Motor neuron (in vitro differentiated cells): ENCODE measurements at regions of chr1 and their contacts with region 1.

Region 1: DNA sequence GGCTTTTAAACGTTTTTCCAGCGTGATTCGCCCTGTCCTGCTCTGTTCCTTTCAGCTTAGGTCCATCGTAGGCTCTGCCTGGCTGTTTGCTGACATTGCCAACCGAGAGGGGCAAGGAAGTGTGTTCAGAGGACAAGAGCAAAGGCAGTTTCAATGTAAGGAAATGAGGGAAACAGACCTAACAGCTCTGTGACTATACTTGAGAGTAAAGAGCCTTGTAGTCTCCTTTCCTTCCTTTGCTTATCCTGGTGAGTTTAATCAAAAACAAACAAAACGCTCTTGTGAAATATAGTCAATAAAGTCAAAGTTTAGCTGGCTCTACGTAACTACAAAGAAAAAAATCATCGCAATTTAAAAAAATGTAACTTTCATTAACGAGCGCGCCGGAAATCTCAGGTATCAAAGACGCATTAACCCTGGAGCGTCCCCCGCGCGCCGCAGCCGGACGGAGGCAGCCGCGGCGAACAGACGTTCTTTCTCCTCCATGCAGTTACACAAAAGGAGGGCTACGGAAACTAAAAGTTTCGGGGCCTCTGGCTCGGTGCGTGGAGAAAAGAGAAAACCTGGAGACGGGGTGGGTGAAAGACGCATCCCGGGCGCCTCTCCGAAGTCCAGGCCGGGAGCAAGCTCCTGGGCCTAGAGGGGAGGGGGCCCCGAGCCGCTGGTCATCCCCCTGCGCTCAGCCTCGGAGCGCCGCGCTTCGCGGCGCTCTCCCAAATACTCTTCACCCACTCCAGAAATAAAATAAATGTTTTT is 617 bp upstream of the ADGRL2 start:
- ATAC-seq: peak in 6 of 8 experiments; percentile 29 to 44 (median 40)
- H3K4me3 ChIP-seq: peak overlapping the region; percentile 77 to 86 (median 80)
- H3K27ac ChIP-seq: peak overlapping the region; percentile 79 to 89
- H3K4me1 ChIP-seq: peaks cover 0 to 8% of the 10 kb centered on the region in 2 donors

Region 2: DNA sequence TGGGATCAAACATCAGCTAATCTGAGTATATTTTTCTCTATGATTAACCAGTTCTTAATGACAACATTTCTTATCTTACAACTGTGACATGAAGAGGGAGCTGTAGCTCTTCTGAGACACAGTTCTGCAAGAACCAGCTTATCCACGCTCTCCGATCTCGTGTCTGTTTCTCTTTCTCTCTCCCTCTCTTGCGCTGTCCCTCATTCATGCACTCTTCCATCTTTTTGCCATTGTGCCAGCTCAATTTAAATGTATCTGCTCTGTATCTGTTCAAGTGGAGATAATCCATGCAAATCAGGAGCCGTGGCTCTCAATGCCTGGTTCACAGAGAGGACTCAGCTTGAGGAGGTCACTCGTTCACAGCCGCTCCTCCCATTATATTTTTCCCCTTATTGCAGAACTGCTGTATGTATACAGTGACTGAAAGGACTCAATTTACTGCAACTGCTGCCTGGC is 494.1 kb before region 1 on chr1:
- in situ Hi-C with region 1: loop called in 2 of 9 experiments (anchors 25 kb)
- ATAC-seq: peak; percentile 81 to 98 (median 97)
- H3K4me3 ChIP-seq: peak overlapping the region; percentile 27 to 51 (median 39)
- H3K27ac ChIP-seq: peak overlapping the region; percentile 29 to 79
- H3K4me1 ChIP-seq: peaks cover 26 to 40% of the 10 kb centered on the region in 2 donors

Region 3: DNA sequence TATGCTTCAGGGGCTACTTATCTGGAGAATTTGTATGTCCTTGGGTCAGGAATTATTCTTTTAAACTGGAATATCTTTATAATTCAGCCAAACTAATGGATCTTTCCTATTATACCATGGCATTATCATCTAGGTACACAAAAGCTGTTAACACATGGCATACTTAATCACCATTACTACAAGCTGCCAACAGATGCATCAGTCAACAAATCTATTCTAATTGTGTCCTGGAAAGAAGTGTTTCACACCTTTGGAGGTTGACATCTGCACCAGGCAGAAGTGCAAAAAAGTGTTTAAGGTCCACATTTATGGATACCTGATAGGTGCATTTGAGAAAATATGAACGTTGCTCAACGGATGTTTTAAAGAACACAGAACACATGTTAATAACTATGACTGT is 469.6 kb before region 1 on chr1:
- in situ Hi-C with region 1: no loop called
- ATAC-seq: peak in 1 of 8 experiments; percentile 50
- H3K4me3 ChIP-seq: no peak overlapping the region
- H3K27ac ChIP-seq: no peak overlapping the region
- H3K4me1 ChIP-seq: peaks cover 19 to 41% of the 10 kb centered on the region in 2 donors

Region 4: DNA sequence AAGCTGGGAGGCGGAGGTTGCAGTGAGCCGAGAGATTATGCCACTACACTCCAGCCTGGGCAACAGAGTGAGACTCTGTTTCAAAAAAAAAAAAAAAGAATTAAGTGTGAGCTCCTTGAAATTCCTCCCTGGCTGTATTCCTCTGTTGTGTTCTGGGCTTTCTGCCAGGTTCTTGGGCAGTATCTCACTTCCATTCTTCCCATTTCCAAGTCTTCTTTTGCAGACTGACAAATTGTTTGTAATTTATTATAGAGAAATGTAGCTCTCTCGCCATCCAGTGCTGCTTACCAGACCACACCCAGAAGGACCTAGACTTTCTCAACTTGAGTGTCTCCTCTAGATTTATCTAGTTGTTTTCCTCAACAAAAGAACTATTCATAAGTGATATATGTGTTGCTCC is 104.4 kb before region 1 on chr1:
- in situ Hi-C with region 1: no loop called
- ATAC-seq: peak in 5 of 8 experiments; percentile 49 to 72 (median 68)
- H3K4me3 ChIP-seq: no peak overlapping the region
- H3K27ac ChIP-seq: no peak overlapping the region
- H3K4me1 ChIP-seq: peaks cover 12 to 15% of the 10 kb centered on the region in 2 donors

Region 5: GRCh38 chr1:81899214-81899821 is 99.2 kb after region 1 on chr1:
- in situ Hi-C with region 1: no loop called
- ATAC-seq: peak in 3 of 8 experiments; percentile 63 to 66 (median 64)
- H3K4me3 ChIP-seq: no peak overlapping the region
- H3K27ac ChIP-seq: no peak overlapping the region
- H3K4me1 ChIP-seq: peaks cover 0 to 10% of the 10 kb centered on the region in 2 donors